ENCODE measurements at regions of chr17 and their contacts with region 1.

Region 1: GRCh38 chr17:76353599-76354316 is at the start of gene PRPSAP1:
- DNase-seq: peak; percentile 93
- ATAC-seq: peak; percentile 96
- H3K4me3 ChIP-seq: peak within 1 kb of the TSS; percentile 93 to 99
- H3K27ac ChIP-seq: peak within 1 kb of the TSS; percentile 89
- H3K4me1 ChIP-seq: peaks cover 0 to 23% of the 10 kb centered on the region in 2 experiments; a peak in 2 of 4 replicates
- H3K27me3 ChIP-seq: no peaks in the 10 kb centered on the region
- CTCF ChIP-seq: peak in 1 of 3 experiments; percentile 62; a peak in 2 of 6 replicates
- POLR2A ChIP-seq: peak; percentile 97
- RAD21 ChIP-seq: no peak; the same call in 1 of the 2 replicates
- total RNA-seq, gene PRPSAP1: 81.4 TPM

Region 2: DNA sequence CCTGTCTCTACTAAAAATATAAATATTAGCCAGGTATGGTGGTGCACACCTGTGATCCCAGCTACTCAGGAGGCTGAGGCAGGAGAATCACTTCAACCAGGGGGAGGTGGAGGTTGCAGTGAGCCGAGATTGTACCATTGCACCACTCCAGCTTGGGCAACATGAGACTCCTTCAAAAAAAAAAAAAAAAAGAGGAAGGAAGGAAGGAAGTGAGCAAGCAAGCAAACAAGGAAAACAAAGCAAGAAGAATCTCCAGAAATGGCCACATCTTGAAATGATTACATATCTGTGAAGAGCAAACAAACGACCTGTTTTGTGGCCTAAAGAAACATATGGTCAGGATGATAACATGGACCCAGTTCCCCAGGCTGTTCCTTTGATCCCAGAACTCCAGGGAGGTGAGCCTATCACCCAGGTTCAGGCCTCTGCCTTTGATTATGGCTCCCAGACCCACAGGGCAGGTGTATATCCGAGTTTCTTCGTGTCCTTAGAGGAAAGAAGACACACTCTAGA is 383.7 kb before region 1 on chr17:
- CTCF ChIA-PET with region 1: no interaction called
- POLR2A ChIA-PET with region 1: no interaction called
- RAD21 ChIA-PET with region 1: no interaction called
- intact Hi-C with region 1: no loop called
- DNase-seq: no peak
- ATAC-seq: no peak
- H3K4me3 ChIP-seq: no peak overlapping the region
- H3K27ac ChIP-seq: no peak overlapping the region
- H3K4me1 ChIP-seq: no peaks in the 10 kb centered on the region
- H3K27me3 ChIP-seq: no peaks in the 10 kb centered on the region
- CTCF ChIP-seq: no peak
- POLR2A ChIP-seq: no peak
- RAD21 ChIP-seq: no peak

Region 3: GRCh38 chr17:76331083-76331482 is 22.7 kb before region 1 on chr17:
- CTCF ChIA-PET with region 1: no interaction called
- POLR2A ChIA-PET with region 1: no interaction called
- RAD21 ChIA-PET with region 1: no interaction called
- intact Hi-C with region 1: no loop called
- DNase-seq: no peak
- ATAC-seq: no peak
- H3K4me3 ChIP-seq: no peak overlapping the region
- H3K27ac ChIP-seq: no peak overlapping the region
- H3K4me1 ChIP-seq: no peaks in the 10 kb centered on the region
- H3K27me3 ChIP-seq: no peaks in the 10 kb centered on the region
- CTCF ChIP-seq: no peak
- POLR2A ChIP-seq: no peak
- RAD21 ChIP-seq: no peak

Region 4: DNA sequence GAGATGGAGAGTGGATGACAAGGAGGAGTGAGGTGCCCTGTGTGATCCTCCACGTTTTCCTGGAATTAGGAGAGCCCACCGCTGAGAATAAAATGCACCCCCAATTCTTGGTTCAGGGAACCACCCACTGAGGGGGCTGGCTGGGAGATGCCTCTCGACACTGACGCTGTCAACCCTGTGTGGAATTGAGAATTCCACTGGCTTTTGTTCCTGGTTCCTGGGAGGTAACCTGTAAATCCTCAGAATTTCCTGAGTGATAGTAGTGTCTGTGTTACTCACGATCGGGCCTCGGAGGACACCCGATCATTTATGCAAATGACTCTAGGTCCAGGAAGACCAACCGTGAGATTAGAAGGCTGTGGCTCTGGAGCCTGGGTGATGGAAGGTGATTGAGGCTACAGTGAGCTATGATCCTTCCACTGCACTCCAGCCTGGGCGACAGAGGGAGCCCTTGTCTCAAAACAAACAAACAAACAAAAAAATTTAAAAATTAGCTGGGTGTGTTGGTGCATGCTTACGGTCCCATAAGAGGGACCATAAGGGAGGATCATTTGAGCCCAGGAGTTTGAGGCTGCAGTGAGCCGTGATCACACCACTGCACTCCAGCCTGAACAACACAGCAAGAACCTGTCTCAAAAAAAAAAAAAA is 11.6 kb after region 1 on chr17:
- CTCF ChIA-PET with region 1: interaction called, 22 read pairs
- POLR2A ChIA-PET with region 1: interaction called, 26 read pairs
- RAD21 ChIA-PET with region 1: interaction called in 1 of 2 experiments, 3 read pairs
- intact Hi-C with region 1: no loop called
- DNase-seq: peak; percentile 57
- ATAC-seq: peak; percentile 93
- H3K4me3 ChIP-seq: no peak overlapping the region; a peak in 1 of 4 replicates
- H3K27ac ChIP-seq: no peak overlapping the region
- H3K4me1 ChIP-seq: peaks cover 10 to 16% of the 10 kb centered on the region in 2 experiments; a peak in 3 of 4 replicates
- H3K27me3 ChIP-seq: no peaks in the 10 kb centered on the region
- CTCF ChIP-seq: peak; percentile 80 to 81 (median 80)
- POLR2A ChIP-seq: no peak
- RAD21 ChIP-seq: peak; percentile 73

Region 5: DNA sequence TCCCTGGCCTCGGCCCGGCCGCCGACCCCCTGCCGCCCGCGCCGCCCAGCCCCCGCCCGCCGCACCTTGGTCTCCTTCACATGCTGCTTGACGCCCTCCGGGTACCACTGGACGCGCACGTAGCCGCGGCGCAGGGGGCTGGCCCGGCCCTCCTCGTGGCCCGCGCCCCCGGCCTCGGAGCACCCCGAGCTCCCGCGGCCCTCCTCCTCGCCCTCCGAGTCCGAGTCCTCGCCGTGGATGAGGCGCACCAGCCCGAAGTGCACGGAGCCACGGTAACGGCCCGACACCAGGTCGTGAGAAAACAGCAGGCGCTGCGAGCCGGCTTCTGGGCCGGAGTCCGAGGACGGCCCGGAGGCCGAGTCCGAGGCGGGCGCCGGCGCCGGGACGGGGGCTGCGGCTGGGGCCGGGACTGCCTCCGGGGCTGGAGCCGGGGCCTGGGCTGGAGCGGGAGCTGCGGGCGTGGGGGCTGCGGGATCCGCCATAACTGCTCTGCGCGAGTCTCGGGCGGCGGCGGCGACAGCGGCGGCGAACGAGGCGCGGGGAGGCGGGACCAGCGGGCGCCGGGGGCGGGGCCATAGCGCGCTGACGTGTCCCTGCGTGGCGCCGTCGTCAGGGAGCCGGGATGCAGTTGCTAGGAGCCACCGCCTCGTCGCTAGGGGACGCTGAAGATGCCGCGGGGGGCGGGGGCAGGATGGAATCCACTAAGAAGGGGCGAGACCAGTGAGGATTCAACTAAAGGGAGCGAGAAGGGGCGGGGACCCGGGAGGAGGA is 99.1 kb after region 1 on chr17 and contains the start of gene UBE2O:
- CTCF ChIA-PET with region 1: no interaction called
- POLR2A ChIA-PET with region 1: no interaction called
- RAD21 ChIA-PET with region 1: no interaction called
- intact Hi-C with region 1: no loop called
- DNase-seq: peak; percentile 86
- ATAC-seq: peak; percentile 95
- H3K4me3 ChIP-seq: peak within 1 kb of the TSS; percentile 89 to 96
- H3K27ac ChIP-seq: peak within 1 kb of the TSS; percentile 89
- H3K4me1 ChIP-seq: peaks cover 23 to 41% of the 10 kb centered on the region in 2 experiments
- H3K27me3 ChIP-seq: no peaks in the 10 kb centered on the region
- CTCF ChIP-seq: peak in 1 of 3 experiments; percentile 41; a peak in 2 of 6 replicates
- POLR2A ChIP-seq: peak; percentile 52
- RAD21 ChIP-seq: no peak
- total RNA-seq, gene UBE2O: 59.1 TPM

Region 6: GRCh38 chr17:77465358-77466041 is 1111.7 kb after region 1 on chr17:
- CTCF ChIA-PET with region 1: no interaction called
- POLR2A ChIA-PET with region 1: no interaction called
- RAD21 ChIA-PET with region 1: no interaction called
- intact Hi-C with region 1: no loop called
- DNase-seq: no peak
- ATAC-seq: no peak
- H3K4me3 ChIP-seq: no peak overlapping the region
- H3K27ac ChIP-seq: no peak overlapping the region
- H3K4me1 ChIP-seq: peaks cover 6 to 20% of the 10 kb centered on the region in 2 experiments
- H3K27me3 ChIP-seq: no peaks in the 10 kb centered on the region
- CTCF ChIP-seq: no peak
- POLR2A ChIP-seq: no peak
- RAD21 ChIP-seq: no peak